ENCODE measurements at regions of chr1 and their contacts with region 1.

Region 1: DNA sequence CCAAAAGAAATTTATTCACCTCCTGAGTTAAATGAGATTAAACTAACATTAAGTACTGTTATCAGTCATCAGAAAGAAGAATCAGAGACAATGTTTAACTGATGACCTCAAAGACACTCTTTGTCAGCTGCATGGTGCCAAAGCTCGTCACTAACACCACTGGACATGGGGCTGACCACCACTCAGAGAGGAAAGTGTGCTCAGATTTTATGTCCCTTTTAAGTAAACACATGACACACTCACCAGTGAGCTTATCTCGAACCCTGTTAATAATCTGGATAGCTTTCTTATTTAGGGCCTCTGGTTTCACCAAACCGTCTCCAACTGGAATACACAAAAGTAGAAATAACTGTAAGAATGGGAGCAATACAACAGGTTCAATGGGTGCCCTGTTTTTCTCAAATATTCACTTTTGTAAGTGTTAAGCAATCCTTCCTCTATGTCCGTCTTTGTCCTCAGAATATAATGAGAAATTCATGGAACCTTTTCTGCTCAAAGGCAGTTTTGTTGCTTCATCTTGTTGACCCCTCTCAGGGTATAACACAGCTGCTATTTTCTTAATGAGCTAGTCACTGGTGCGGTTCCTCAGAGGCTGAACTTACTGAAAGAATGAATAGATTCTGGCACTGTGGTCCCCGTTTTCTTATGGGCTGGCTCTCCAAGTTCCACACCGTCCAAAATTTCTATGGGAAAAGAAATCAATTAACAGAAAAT is 9.5 kb upstream of the EXOSC10 start:
- DNase-seq: no peak
- H3K4me3 Mint-ChIP-seq: no peak overlapping the region
- H3K27ac Mint-ChIP-seq: no peak overlapping the region
- H3K4me1 Mint-ChIP-seq: no peaks in the 10 kb centered on the region
- H3K27me3 Mint-ChIP-seq: no peaks in the 10 kb centered on the region
- CTCF ChIP-seq: no peak

Region 2: GRCh38 chr1:11059990-11060830 is 49.0 kb before region 1 on chr1 and contains the start of gene SRM:
- CTCF ChIA-PET with region 1: no interaction called
- POLR2A ChIA-PET with region 1: no interaction called
- intact Hi-C with region 1: loop called (anchors 1 kb)
- DNase-seq: peak; percentile 88
- H3K4me3 Mint-ChIP-seq: peak within 1 kb of the TSS; percentile 97
- H3K27ac Mint-ChIP-seq: peak within 1 kb of the TSS; percentile 92
- H3K4me1 Mint-ChIP-seq: peaks cover 7% of the 10 kb centered on the region
- H3K27me3 Mint-ChIP-seq: no peaks in the 10 kb centered on the region
- CTCF ChIP-seq: peak; percentile 43
- total RNA-seq, gene SRM: 284 and 327 TPM in 2 replicates